Activated T-helper 2 cell treated with anti-CD3 and anti-CD28 coated beads, Interferon-gamma antibody, Interleukin-2, Interleukin-4, amounts not matched to agents 10 μg/mL and 5 μg/mL and 100 μg/mL, durations not matched to agents 14 hours and 24 hours and 36 hours (primary cell): ENCODE measurements at regions of chr12 and their contacts with region 1.

Region 1: GRCh38 chr12:52870351-52871290 is 21.8 kb upstream of the KRT78 start:
- DNase-seq: peak; percentile 66
- H3K4me3 Mint-ChIP-seq: no peak overlapping the region
- H3K27ac Mint-ChIP-seq: no peak overlapping the region
- H3K4me1 Mint-ChIP-seq: peaks cover 18% of the 10 kb centered on the region
- H3K27me3 Mint-ChIP-seq: peaks cover 7% of the 10 kb centered on the region

Region 2: DNA sequence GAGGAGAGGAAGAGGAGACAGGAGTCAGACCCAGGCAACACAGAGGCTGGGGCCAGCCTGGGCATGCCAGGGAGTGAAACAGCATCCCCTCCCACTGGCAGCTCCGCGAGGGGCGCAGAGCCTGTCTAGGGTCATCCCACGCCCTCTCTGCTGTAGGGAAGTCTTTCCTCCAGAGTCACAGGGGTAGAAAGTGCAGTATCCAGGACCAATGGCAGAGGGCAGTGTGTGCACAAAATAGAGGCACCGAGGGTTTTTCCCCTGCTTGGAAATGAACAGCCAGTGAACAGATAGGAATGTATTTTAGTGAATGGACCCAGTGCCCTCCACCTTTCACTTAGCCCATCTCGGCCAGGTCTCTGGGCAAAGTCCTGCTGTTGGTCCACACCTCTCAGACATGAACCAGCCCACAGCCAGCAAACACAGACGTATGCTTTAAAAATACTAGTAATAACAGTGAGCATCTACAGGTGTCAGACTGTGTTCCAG is 287.6 kb before region 1 on chr12:
- intact Hi-C with region 1: loop called (anchors 1 kb)
- DNase-seq: peak; percentile 52
- H3K4me3 Mint-ChIP-seq: no peak overlapping the region
- H3K27ac Mint-ChIP-seq: no peak overlapping the region
- H3K4me1 Mint-ChIP-seq: peaks cover 32% of the 10 kb centered on the region
- H3K27me3 Mint-ChIP-seq: peaks cover 13% of the 10 kb centered on the region

Region 3: DNA sequence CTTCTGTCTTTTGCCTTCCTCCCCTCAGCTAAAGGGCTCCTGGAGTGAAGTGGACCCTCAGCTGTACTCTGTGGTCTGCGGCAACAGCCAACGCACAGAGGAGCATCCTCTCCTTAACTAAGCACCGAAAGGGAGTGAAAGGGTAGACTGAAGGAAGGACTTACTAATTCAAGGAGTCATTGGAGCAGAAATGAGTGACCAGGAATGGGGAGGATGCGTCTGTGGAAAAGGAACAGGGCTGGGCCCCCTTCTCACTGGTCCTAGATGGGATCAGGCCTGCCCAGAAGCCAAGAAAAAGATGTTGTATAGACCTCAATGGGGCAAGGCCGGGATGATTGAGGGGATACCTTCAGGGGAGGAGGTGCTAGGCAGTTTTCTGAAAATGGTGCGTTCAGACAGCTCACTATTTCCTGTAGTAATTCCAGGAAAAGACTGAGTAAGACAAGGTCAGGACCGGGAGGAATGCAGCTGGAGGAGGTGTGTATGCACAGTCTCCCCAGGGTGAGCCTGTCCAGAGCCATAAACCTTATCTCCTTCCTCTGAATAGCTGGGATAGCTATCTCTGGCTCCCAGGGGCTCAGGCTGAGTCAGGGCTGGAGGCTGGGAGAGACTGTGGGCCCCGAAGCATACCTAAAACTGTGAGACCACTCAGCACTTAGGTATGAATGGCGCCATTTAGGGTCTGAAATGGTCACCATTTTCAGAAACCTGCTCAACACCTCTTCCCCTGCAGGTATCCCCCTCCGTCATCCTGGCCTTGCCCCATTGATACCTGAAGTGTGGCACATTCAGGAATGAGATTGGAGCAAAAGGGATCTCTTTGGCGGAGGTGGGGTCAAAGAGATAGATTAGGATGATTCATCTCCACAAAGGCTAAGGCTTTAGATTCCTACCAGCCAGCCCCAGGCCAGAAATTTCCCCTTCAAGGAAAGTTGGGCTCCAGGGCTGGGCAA is 54.4 kb after region 1 on chr12:
- intact Hi-C with region 1: no loop called
- DNase-seq: no peak
- H3K4me3 Mint-ChIP-seq: no peak overlapping the region
- H3K27ac Mint-ChIP-seq: no peak overlapping the region
- H3K4me1 Mint-ChIP-seq: peaks cover 4% of the 10 kb centered on the region
- H3K27me3 Mint-ChIP-seq: peaks cover 4% of the 10 kb centered on the region